Activated CD4-positive, alpha-beta T cell treated with anti-CD3 and anti-CD28 coated beads, Interleukin-2, amount 10 ng/mL, durations not matched to agents 7 days and 5 days (primary cell): ENCODE measurements at regions of chr12 and their contacts with region 1.

Region 1: DNA sequence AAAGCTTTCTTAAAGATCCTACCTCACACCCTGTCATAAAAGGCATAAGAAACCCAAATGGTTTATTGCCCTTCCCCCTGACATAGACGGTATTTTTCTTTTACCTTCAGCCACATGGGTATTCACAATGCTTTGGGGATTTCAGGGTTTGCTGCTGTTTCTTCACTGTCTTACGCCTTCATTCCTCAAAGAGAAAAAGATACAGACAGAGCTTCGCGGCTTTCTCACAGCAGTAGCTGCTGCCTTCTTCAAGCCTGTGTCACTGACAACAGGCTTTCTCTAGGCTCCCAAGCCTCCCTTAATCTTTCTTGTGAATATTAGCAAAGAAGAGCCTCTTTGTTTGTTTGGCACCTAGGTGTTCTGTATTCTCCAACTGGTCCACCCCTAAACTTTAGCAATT is 197.4 kb upstream of the ARID2 start:
- DNase-seq: no peak
- H3K4me3 Mint-ChIP-seq: no peak overlapping the region
- H3K27ac Mint-ChIP-seq: no peak overlapping the region
- H3K4me1 Mint-ChIP-seq: no peaks in the 10 kb centered on the region
- H3K27me3 Mint-ChIP-seq: peaks cover 12% of the 10 kb centered on the region

Region 2: GRCh38 chr12:45483571-45483970 is 48.5 kb before region 1 on chr12:
- CTCF ChIA-PET with region 1: no interaction called
- POLR2A ChIA-PET with region 1: no interaction called
- DNase-seq: no peak
- H3K4me3 Mint-ChIP-seq: no peak overlapping the region
- H3K27ac Mint-ChIP-seq: no peak overlapping the region
- H3K4me1 Mint-ChIP-seq: no peaks in the 10 kb centered on the region
- H3K27me3 Mint-ChIP-seq: peaks cover 7% of the 10 kb centered on the region

Region 3: DNA sequence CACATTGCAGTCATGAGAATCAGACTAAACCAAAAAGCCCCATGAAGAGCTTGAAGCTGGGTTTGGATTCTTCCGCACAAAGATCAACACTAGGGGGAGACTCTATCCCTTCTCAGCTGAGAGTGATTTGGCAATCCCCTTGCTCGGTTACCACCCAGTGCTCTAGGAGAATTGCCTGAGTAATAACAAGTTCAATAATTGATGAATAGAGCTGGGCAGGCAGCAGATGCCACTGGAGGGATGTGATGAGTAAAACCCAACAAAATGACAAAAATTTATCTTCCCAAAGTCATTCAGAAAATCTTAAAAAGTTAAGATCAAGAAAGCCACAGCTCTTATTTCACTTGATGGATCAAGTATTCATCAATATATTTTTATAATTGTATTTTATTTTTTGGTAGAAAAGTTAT is 11.8 kb after region 1 on chr12:
- CTCF ChIA-PET with region 1: interaction called, 13 read pairs
- POLR2A ChIA-PET with region 1: no interaction called
- DNase-seq: peak; percentile 71
- H3K4me3 Mint-ChIP-seq: no peak overlapping the region
- H3K27ac Mint-ChIP-seq: no peak overlapping the region
- H3K4me1 Mint-ChIP-seq: peaks cover 4% of the 10 kb centered on the region
- H3K27me3 Mint-ChIP-seq: peaks cover 11% of the 10 kb centered on the region